ENCODE measurements at regions of chr7 and their contacts with region 1.

Region 1: GRCh38 chr7:104983578-104984539 is 30.1 kb upstream of the KMT2E start:
- H3K4me3 ChIP-seq: peak overlapping the region; percentile 74
- H3K27ac ChIP-seq: peak overlapping the region; percentile 84
- H3K4me1 ChIP-seq: peaks cover 43% of the 10 kb centered on the region
- CTCF ChIP-seq: peak; percentile 88

Region 2: GRCh38 chr7:104627516-104627915 is 356.3 kb before region 1 on chr7:
- CTCF ChIA-PET with region 1: no interaction called
- POLR2A ChIA-PET with region 1: no interaction called
- H3K4me3 ChIP-seq: no peak overlapping the region
- H3K27ac ChIP-seq: no peak overlapping the region
- H3K4me1 ChIP-seq: no peaks in the 10 kb centered on the region
- CTCF ChIP-seq: no peak

Region 3: DNA sequence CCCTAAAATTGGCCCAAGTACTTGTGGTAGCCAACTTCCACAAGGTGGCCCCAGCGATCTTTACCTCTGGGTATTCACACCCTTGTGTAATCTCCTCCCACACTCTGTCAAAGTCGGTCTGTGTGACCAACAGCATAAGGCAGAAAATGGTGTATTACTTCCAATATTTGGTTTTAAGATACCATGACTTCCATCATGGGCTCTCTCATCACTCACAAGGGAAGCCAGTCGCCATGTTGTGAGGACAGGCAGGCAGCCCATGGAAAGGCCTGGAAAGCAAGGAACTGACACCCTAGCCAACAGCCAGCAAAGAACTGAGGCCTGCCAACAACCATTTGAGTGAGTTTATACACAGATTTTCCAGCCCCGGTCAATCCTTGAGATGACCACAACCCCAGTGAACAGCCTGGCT is 60.8 kb before region 1 on chr7:
- CTCF ChIA-PET with region 1: interaction called, 19 read pairs
- POLR2A ChIA-PET with region 1: no interaction called
- H3K4me3 ChIP-seq: no peak overlapping the region
- H3K27ac ChIP-seq: peak overlapping the region; percentile 27; the same call in 1 of the 2 replicates
- H3K4me1 ChIP-seq: no peaks in the 10 kb centered on the region
- CTCF ChIP-seq: peak; percentile 92

Region 4: GRCh38 chr7:104967595-104967994 is 16.3 kb before region 1 on chr7:
- CTCF ChIA-PET with region 1: interaction called, 10 read pairs
- POLR2A ChIA-PET with region 1: interaction called, 3 read pairs
- H3K4me3 ChIP-seq: no peak overlapping the region
- H3K27ac ChIP-seq: no peak overlapping the region
- H3K4me1 ChIP-seq: no peaks in the 10 kb centered on the region
- CTCF ChIP-seq: no peak

Region 5: GRCh38 chr7:105013221-105013815 is 29.5 kb after region 1 on chr7:
- CTCF ChIA-PET with region 1: interaction called, 28 read pairs
- POLR2A ChIA-PET with region 1: interaction called, 92 read pairs
- H3K4me3 ChIP-seq: peak overlapping the region; percentile 97
- H3K27ac ChIP-seq: peak overlapping the region; percentile 97
- H3K4me1 ChIP-seq: peaks cover 13% of the 10 kb centered on the region; the same call in 1 of the 2 replicates
- CTCF ChIP-seq: peak; percentile 89

Region 6: GRCh38 chr7:105429746-105430612 is 446.1 kb after region 1 on chr7:
- CTCF ChIA-PET with region 1: interaction called, 12 read pairs
- POLR2A ChIA-PET with region 1: no interaction called
- H3K4me3 ChIP-seq: no peak overlapping the region
- H3K27ac ChIP-seq: no peak overlapping the region
- H3K4me1 ChIP-seq: no peaks in the 10 kb centered on the region
- CTCF ChIP-seq: peak; percentile 38; the same call in 1 of the 2 replicates